ENCODE measurements at regions of chr5 and their contacts with region 1.

Region 1: GRCh38 chr5:153147891-153148623 is 342.4 kb upstream of the GRIA1 start:
- DNase-seq: peak; percentile 17
- ATAC-seq: peak; percentile 99
- H3K4me3 Mint-ChIP-seq: peak overlapping the region; percentile 42
- H3K27ac Mint-ChIP-seq: no peak overlapping the region
- H3K4me1 Mint-ChIP-seq: 0 out of 2 replicates have a peak, but pooled peaks cover 2% of the 10 kb centered on the region
- H3K27me3 Mint-ChIP-seq: no peaks in the 10 kb centered on the region; the same call in 1 of the 2 replicates
- CTCF ChIP-seq: peak; percentile 43

Region 2: DNA sequence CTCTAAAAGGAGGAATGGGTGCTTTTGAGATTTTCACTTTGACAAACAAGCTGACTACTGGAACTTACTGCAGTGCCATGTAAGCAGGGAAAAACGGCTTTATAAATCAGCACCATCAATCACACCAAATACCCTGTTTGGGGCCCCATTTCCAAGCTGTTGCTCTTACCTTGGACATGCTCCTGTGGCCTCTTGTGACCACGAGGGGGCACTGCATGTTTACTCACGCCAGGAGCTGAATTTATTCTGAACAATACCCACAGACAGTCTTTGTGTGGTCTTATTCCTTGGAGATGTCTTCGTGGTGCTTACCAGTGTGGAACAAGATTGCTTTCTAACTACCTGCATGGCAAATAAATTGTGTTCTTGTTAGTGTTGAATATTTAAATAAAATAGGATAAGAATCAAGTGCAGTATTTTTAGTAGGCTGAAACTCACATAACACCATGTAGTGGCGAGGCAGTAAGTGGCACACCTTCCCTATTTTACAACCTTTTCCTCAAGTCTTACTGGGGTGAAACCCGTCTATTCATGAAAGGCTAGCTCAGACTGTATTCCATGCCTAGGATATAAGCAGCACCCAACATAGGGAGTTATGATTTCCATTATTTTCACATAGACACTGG is 587.4 kb before region 1 on chr5:
- CTCF ChIA-PET with region 1: interaction called, 19 read pairs
- POLR2A ChIA-PET with region 1: no interaction called
- DNase-seq: peak; percentile 76
- ATAC-seq: peak; percentile 91
- H3K4me3 Mint-ChIP-seq: no peak overlapping the region
- H3K27ac Mint-ChIP-seq: no peak overlapping the region
- H3K4me1 Mint-ChIP-seq: peaks cover 7% of the 10 kb centered on the region
- H3K27me3 Mint-ChIP-seq: no peaks in the 10 kb centered on the region
- CTCF ChIP-seq: peak; percentile 71

Region 3: GRCh38 chr5:153168241-153168640 is 20.2 kb after region 1 on chr5:
- CTCF ChIA-PET with region 1: no interaction called
- POLR2A ChIA-PET with region 1: no interaction called
- DNase-seq: no peak
- ATAC-seq: no peak
- H3K4me3 Mint-ChIP-seq: no peak overlapping the region
- H3K27ac Mint-ChIP-seq: no peak overlapping the region
- H3K4me1 Mint-ChIP-seq: no peaks in the 10 kb centered on the region
- H3K27me3 Mint-ChIP-seq: no peaks in the 10 kb centered on the region
- CTCF ChIP-seq: no peak